ENCODE measurements at regions of chr1 and their contacts with region 1.

Region 1: DNA sequence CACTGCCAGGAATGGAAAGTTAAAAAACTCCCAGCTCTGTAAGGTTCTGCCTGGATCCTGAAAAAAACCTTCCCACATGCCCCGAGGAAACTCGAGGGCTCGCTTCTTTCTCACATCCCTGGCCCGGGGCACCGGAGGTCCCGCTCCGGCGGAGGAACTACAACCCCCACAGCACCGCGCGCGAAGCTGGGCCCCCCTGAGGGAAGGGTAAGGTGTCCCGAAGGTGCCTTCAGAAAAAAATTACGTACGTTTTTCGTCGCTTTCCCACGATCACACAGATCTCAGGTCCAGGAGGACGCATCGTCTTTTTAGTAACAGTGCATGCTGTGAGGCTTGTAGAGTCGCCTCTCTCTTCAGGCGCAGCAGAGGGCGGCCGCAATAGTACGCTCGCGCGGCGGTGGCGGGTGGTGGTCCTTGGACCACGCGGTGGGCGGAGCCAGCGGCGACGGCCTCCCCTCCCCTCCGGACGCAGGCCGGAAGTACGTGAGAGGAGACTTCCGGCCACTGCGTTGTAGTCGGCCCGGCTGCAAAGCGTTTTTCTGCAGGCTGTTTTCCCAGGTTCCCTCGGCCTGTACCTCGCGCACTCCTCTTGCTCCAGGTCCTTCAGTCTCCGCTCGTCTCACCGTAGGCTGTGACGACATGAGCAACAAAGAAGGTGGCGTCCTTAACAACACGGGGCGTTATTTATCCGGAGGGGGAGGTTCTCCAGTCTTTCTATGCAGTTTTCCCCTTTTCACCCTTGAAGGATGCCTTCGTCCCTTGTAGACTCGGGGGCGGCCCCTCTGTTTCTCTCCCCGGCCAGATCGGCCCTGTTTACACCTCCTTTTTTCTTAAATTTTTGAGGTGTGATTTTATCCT is at the start of gene TSNAX:
- DNase-seq: peak; percentile 85 to 94 (median 92)
- ATAC-seq: peak; percentile 93
- H3K4me3 ChIP-seq: peak within 1 kb of the TSS; percentile 93
- H3K4me3 Mint-ChIP-seq: peak within 1 kb of the TSS; percentile 85 to 99 (median 97)
- H3K27ac ChIP-seq: peak within 1 kb of the TSS; percentile 86
- H3K27ac Mint-ChIP-seq: peak within 1 kb of the TSS; percentile 96 to 100 (median 99)
- H3K4me1 ChIP-seq: peaks cover 24 to 26% of the 10 kb centered on the region in 2 donors
- H3K4me1 Mint-ChIP-seq: peaks cover 23 to 55% (median 50%) of the 10 kb centered on the region in 7 donors
- H3K27me3 ChIP-seq: no peaks in the 10 kb centered on the region
- H3K27me3 Mint-ChIP-seq: no peaks in the 10 kb centered on the region
- total RNA-seq, gene TSNAX: 33.7 to 49.7 (median 34.3) TPM

Region 2: DNA sequence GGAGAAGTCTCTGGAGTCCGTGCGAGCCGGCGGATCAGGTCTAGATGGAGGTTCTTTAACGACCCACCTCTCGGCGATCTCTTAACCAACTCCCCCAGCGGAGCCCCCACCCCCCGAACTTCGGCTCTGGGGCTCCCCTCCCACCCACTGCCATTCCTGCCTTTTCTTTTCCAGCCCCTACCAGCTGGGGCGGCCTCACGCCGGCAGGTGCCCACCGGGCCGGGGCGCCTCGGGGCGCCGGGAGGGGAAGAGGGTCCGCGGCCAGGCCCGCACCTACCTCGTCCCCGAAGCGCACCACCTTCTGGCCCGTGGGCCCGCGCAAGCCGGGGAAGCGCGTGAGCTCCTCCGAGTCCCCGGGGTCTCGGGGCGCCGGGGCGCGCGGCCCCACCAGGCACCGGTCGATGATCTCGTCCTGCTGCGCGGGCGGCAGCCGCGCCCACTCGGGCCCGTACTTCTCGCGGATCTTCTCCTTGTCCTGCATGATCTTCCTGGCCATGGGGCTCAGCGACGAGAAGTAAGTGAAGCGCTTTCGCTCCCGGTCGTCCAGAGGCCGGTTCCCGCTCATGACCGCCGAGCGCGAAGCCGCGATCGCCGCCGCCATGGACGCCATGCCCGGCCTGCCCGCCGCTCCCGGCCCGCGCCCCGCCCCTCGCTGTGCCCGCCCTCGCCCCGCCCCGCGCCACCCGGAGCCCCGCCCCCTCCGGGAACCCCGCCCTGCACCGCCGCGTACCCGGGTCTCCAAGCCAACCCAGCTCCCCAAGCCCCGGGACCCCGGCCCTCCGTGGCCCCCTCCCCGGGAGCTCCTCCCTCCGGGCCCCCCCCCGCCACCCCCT is 660.3 kb before region 1 on chr1 and contains the start of gene C1orf198:
- CTCF ChIA-PET with region 1: no interaction called
- POLR2A ChIA-PET with region 1: no interaction called
- intact Hi-C with region 1: loop called (anchors 2 to 10 kb)
- DNase-seq: peak; percentile 48 to 84 (median 69)
- ATAC-seq: peak; percentile 97
- H3K4me3 ChIP-seq: peak within 1 kb of the TSS; percentile 76
- H3K4me3 Mint-ChIP-seq: peak within 1 kb of the TSS; percentile 70 to 94 (median 88)
- H3K27ac ChIP-seq: peak within 1 kb of the TSS; percentile 67
- H3K27ac Mint-ChIP-seq: peak within 1 kb of the TSS in 8 of 9 donors; percentile 29 to 84 (median 62)
- H3K4me1 ChIP-seq: peaks cover 0 to 5% of the 10 kb centered on the region in 2 donors
- H3K4me1 Mint-ChIP-seq: peaks cover 10 to 33% (median 24%) of the 10 kb centered on the region in 7 donors
- H3K27me3 ChIP-seq: peaks cover 0 to 7% of the 10 kb centered on the region in 2 donors
- H3K27me3 Mint-ChIP-seq: peaks cover 13 to 38% (median 25%) of the 10 kb centered on the region in 5 donors
- total RNA-seq, gene C1orf198: 2.9 to 6.0 (median 3.7) TPM

Region 3: DNA sequence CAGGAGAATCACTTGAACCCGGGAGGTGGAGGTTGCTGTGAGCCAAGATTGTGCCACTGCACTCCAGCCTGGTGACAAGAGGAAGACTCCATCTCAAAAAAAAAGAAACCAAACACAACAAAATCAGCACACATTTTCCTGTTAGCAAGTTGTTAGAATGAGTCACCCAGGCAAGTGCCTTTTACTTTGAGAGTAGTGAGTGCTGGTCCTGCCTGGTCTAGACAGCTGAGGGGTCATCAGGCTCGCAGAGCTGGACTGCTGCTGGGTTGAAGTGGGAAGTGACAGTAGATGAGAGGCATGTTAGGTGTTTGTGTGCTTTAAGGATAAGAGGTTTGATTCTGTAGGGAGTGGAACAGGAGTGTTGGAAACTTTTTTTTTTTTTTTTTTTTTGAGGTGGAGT is 255.5 kb before region 1 on chr1:
- CTCF ChIA-PET with region 1: no interaction called
- POLR2A ChIA-PET with region 1: no interaction called
- intact Hi-C with region 1: loop called in 1 of 2 experiments (anchors 2 kb)
- DNase-seq: peak in 1 of 9 donors; percentile 33
- ATAC-seq: no peak
- H3K4me3 ChIP-seq: no peak overlapping the region
- H3K4me3 Mint-ChIP-seq: peak overlapping the region in 7 of 10 donors; percentile 28 to 81 (median 60)
- H3K27ac ChIP-seq: no peak overlapping the region
- H3K27ac Mint-ChIP-seq: peak overlapping the region; percentile 28 to 99 (median 93)
- H3K4me1 ChIP-seq: peaks cover 0 to 3% of the 10 kb centered on the region in 2 donors
- H3K4me1 Mint-ChIP-seq: peaks cover 6 to 52% (median 24%) of the 10 kb centered on the region in 7 donors
- H3K27me3 ChIP-seq: no peaks in the 10 kb centered on the region
- H3K27me3 Mint-ChIP-seq: no peaks in the 10 kb centered on the region

Region 4: DNA sequence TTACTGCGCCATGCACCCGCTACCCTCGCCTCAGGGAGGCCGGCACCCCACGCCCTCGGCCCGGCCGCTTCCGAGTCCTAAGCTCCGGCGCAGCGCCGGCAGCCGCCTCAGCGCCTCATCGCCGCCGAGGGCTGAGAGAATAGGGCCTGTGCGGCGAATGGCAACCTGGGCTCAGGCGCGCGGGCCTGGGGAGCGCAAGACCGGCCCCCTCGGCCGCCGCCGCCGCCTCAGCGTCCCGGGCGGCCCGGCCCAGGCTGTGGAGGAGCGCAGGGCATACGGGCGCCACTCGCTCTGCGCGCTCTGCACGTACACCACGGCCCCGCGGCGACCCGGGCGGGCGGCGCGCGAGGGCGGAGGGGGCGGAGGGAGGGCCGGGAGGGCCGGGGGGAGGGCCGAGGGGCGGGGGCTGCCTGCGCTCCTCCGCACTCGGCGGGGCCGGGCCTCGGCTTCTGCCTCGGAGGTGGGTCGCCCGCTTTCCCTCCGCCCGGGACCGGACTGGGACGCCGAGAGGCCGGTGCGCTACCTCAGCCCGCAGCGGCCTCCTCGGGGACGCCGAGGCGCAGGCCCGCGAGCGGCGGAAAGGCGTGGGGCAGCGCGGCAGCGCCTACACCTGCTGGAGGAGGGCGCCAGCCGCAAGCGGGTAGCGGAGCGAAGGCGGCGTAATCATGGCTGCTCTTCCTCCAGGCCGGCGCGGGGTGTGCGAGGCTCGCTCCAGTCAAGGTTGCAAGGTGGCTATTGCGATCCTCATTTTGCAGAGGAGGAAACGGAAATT is 106.2 kb before region 1 on chr1 and contains the start of gene EGLN1:
- CTCF ChIA-PET with region 1: no interaction called
- POLR2A ChIA-PET with region 1: interaction called, 32 read pairs
- intact Hi-C with region 1: loop called (anchors 1 kb)
- DNase-seq: peak; percentile 73 to 86 (median 83)
- ATAC-seq: peak; percentile 92
- H3K4me3 ChIP-seq: peak within 1 kb of the TSS; percentile 86
- H3K4me3 Mint-ChIP-seq: peak within 1 kb of the TSS; percentile 89 to 97 (median 92)
- H3K27ac ChIP-seq: peak within 1 kb of the TSS; percentile 80
- H3K27ac Mint-ChIP-seq: peak within 1 kb of the TSS; percentile 82 to 97 (median 91)
- H3K4me1 ChIP-seq: peaks cover 28 to 34% of the 10 kb centered on the region in 2 donors
- H3K4me1 Mint-ChIP-seq: peaks cover 36 to 56% (median 46%) of the 10 kb centered on the region in 7 donors
- H3K27me3 ChIP-seq: no peaks in the 10 kb centered on the region
- H3K27me3 Mint-ChIP-seq: peaks cover 0 to 32% (median 0%) of the 10 kb centered on the region in 5 donors
- total RNA-seq, gene EGLN1: 13.6 to 38.9 (median 23.0) TPM

Region 5: GRCh38 chr1:231563253-231563652 is 34.9 kb after region 1 on chr1:
- CTCF ChIA-PET with region 1: no interaction called
- POLR2A ChIA-PET with region 1: no interaction called
- intact Hi-C with region 1: no loop called
- DNase-seq: no peak
- ATAC-seq: no peak
- H3K4me3 ChIP-seq: no peak overlapping the region
- H3K4me3 Mint-ChIP-seq: no peak overlapping the region
- H3K27ac ChIP-seq: no peak overlapping the region
- H3K27ac Mint-ChIP-seq: peak overlapping the region in 1 of 9 donors; percentile 12
- H3K4me1 ChIP-seq: no peaks in the 10 kb centered on the region
- H3K4me1 Mint-ChIP-seq: peaks cover 0 to 4% (median 0%) of the 10 kb centered on the region in 7 donors
- H3K27me3 ChIP-seq: no peaks in the 10 kb centered on the region
- H3K27me3 Mint-ChIP-seq: no peaks in the 10 kb centered on the region

Region 6: DNA sequence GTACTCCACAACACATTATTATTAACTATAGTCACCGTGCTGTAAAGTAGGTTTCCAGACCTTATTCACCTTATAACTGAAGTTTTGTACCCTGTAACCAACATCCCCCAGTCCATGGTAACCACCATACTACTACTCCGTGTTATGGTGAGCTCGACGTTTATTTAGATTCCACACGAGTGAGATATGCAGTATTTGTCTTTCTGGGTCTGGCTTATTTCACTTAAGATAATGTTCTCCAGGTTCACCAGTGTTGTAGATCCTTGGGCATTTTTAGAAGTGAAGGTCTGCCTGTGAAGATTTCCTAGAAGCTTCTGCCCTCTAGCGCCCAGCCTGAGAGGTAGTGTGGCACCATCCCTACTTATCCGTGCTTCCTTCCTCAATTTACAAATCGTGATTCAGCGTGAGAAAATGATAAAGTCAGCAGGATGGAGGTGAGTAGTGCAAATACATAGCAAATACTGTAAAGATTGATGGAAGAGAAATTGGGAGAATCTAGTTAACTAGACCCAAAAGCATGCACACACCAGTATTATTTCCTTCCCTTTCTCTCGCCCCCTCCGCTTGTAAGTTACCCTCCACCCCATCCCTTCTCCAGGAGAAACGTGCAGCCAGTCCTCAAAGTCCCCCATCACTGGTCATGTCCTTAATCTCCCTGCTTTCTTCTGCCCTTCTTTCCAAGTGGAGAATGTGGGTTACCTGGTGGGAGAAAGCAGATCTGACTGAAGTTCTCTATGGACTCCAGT is 62.2 kb after region 1 on chr1:
- CTCF ChIA-PET with region 1: no interaction called
- POLR2A ChIA-PET with region 1: no interaction called
- intact Hi-C with region 1: no loop called
- DNase-seq: peak in 5 of 9 donors; percentile 24 to 43 (median 31)
- ATAC-seq: peak; percentile 83
- H3K4me3 ChIP-seq: no peak overlapping the region
- H3K4me3 Mint-ChIP-seq: no peak overlapping the region
- H3K27ac ChIP-seq: no peak overlapping the region
- H3K27ac Mint-ChIP-seq: no peak overlapping the region
- H3K4me1 ChIP-seq: no peaks in the 10 kb centered on the region
- H3K4me1 Mint-ChIP-seq: peaks cover 3 to 10% (median 6%) of the 10 kb centered on the region in 7 donors
- H3K27me3 ChIP-seq: no peaks in the 10 kb centered on the region
- H3K27me3 Mint-ChIP-seq: peaks cover 0 to 6% (median 0%) of the 10 kb centered on the region in 5 donors

Region 7: GRCh38 chr1:231612393-231613089 is 84.1 kb after region 1 on chr1:
- CTCF ChIA-PET with region 1: no interaction called
- POLR2A ChIA-PET with region 1: no interaction called
- intact Hi-C with region 1: loop called in 1 of 2 experiments (anchors 5 kb)
- DNase-seq: peak; percentile 20 to 79 (median 67)
- ATAC-seq: peak; percentile 96
- H3K4me3 ChIP-seq: peak overlapping the region; percentile 34
- H3K4me3 Mint-ChIP-seq: peak overlapping the region; percentile 56 to 82 (median 74)
- H3K27ac ChIP-seq: peak overlapping the region; percentile 59
- H3K27ac Mint-ChIP-seq: peak overlapping the region; percentile 79 to 94 (median 90)
- H3K4me1 ChIP-seq: peaks cover 41 to 45% of the 10 kb centered on the region in 2 donors
- H3K4me1 Mint-ChIP-seq: peaks cover 53 to 70% (median 63%) of the 10 kb centered on the region in 7 donors
- H3K27me3 ChIP-seq: no peaks in the 10 kb centered on the region
- H3K27me3 Mint-ChIP-seq: peaks cover 0 to 14% (median 0%) of the 10 kb centered on the region in 5 donors